HEK293 (cell line): ENCODE measurements at regions of chr10 and their contacts with region 1.

Region 1: DNA sequence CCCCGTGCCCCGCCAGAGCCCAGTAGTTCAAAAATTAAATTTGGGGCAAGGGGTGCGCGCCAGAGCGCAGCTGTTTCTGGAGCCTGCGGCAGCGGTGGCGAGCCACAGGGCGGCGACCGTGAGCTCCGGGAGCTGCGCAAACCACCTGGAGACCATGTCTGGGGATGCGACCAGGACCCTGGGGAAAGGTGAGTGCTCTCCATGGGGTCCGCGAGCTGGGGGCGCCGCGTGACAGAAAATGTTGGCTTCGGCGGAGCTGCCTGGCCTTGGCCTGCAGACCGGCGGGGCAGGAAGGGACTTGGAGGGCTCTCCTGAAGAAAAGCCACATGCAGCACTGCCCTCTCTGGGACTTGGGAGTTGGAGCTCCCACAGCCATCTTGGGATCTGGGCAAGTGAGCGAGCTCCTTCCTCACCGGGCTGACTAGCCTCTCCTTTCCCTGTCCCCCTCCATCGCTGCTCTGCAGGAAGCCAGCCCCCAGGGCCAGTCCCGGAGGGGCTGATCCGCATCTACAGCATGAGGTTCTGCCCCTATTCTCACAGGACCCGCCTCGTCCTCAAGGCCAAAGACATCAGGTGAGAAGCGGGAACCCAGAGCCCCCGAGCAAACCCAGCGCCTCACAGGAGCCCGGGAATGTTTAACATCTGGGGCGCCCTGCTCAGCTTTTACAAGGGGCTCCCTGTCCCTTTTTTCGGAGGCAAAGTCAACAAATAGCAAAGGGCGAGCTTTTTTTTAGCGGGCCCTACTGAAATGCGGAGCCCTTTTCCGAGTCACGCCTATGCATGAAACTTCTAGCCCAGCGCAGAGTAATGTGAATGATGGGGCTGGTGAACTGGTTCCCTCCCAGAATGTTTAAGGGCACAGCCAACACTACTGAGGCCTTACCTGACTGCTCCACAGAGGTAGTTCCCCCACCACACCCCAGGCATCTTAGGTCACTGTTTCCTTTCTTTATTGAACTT is 6.1 kb downstream of the GSTO2 start:
- H3K4me3 ChIP-seq: peak overlapping the region; percentile 33
- H3K27ac ChIP-seq: no peak overlapping the region
- H3K4me1 ChIP-seq: no peaks in the 10 kb centered on the region
- CTCF ChIP-seq: peak; percentile 86

Region 2: GRCh38 chr10:104262055-104262454 is 13.0 kb before region 1 on chr10:
- CTCF ChIA-PET with region 1: interaction called, 21 read pairs
- POLR2A ChIA-PET with region 1: no interaction called
- H3K4me3 ChIP-seq: no peak overlapping the region
- H3K27ac ChIP-seq: no peak overlapping the region
- H3K4me1 ChIP-seq: no peaks in the 10 kb centered on the region
- CTCF ChIP-seq: no peak

Region 3: GRCh38 chr10:104300736-104301292 is 25.8 kb after region 1 on chr10:
- CTCF ChIA-PET with region 1: interaction called, 202 read pairs
- POLR2A ChIA-PET with region 1: no interaction called
- H3K4me3 ChIP-seq: no peak overlapping the region
- H3K27ac ChIP-seq: no peak overlapping the region
- H3K4me1 ChIP-seq: no peaks in the 10 kb centered on the region
- CTCF ChIP-seq: no peak

Region 4: GRCh38 chr10:104353325-104354048 is 78.4 kb after region 1 on chr10 and contains the start of gene CFAP58:
- CTCF ChIA-PET with region 1: interaction called, 104 read pairs
- POLR2A ChIA-PET with region 1: interaction called, 7 read pairs
- H3K4me3 ChIP-seq: peak within 1 kb of the TSS; percentile 45
- H3K27ac ChIP-seq: no peak within 1 kb of the TSS
- H3K4me1 ChIP-seq: peaks cover 4% of the 10 kb centered on the region; the same call in 1 of the 2 replicates
- CTCF ChIP-seq: peak; percentile 85

Region 5: DNA sequence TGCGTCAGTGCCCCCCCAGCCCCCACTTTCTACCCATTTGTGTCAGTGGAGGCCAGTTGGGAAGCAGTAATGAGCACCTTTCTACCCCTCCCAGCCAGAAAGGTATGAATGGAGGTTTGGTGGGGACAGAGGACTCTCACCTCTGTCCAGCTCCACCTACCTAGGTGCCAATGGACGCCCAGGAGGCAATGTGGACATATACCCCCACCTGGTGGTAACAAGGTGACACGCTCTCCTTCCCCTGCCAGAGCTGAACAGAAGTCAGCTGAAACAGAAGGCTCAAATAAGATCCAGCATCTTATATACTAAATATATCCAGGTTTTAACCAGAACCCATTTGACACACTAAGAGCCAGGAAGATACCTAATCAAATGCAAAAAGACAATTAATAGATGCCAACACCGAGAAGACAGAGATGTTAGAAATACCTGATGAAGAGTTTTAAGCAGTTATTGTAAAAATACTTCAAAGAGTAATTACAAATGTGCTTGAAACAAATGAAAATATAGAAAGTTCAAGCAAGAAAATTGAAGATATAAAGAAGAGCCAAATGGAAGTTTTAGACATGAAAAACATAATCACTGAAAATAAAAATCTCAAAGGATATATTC is 347.7 kb after region 1 on chr10:
- CTCF ChIA-PET with region 1: interaction called, 11 read pairs
- POLR2A ChIA-PET with region 1: no interaction called
- H3K4me3 ChIP-seq: no peak overlapping the region
- H3K27ac ChIP-seq: no peak overlapping the region
- H3K4me1 ChIP-seq: no peaks in the 10 kb centered on the region
- CTCF ChIP-seq: no peak